ENCODE measurements at regions of chrX and their contacts with region 1.

Region 1: GRCh38 chrX:9341291-9342201 is 123.3 kb upstream of the TBL1X start:
- DNase-seq: peak; percentile 83
- H3K4me3 Mint-ChIP-seq: peak overlapping the region; percentile 76
- H3K27ac Mint-ChIP-seq: peak overlapping the region; percentile 85
- H3K4me1 Mint-ChIP-seq: peaks cover 31% of the 10 kb centered on the region
- H3K27me3 Mint-ChIP-seq: no peaks in the 10 kb centered on the region

Region 2: GRCh38 chrX:9164535-9165425 is 176.8 kb before region 1 on chrX:
- intact Hi-C with region 1: loop called (anchors 5 kb)
- DNase-seq: no peak
- H3K4me3 Mint-ChIP-seq: peak overlapping the region; percentile 11
- H3K27ac Mint-ChIP-seq: peak overlapping the region; percentile 77
- H3K4me1 Mint-ChIP-seq: peaks cover 30% of the 10 kb centered on the region
- H3K27me3 Mint-ChIP-seq: no peaks in the 10 kb centered on the region

Region 3: GRCh38 chrX:9285342-9285771 is 56.2 kb before region 1 on chrX:
- intact Hi-C with region 1: loop called (anchors 1 kb)
- DNase-seq: peak; percentile 66
- H3K4me3 Mint-ChIP-seq: peak overlapping the region; percentile 46
- H3K27ac Mint-ChIP-seq: peak overlapping the region; percentile 88
- H3K4me1 Mint-ChIP-seq: peaks cover 24% of the 10 kb centered on the region
- H3K27me3 Mint-ChIP-seq: no peaks in the 10 kb centered on the region

Region 4: DNA sequence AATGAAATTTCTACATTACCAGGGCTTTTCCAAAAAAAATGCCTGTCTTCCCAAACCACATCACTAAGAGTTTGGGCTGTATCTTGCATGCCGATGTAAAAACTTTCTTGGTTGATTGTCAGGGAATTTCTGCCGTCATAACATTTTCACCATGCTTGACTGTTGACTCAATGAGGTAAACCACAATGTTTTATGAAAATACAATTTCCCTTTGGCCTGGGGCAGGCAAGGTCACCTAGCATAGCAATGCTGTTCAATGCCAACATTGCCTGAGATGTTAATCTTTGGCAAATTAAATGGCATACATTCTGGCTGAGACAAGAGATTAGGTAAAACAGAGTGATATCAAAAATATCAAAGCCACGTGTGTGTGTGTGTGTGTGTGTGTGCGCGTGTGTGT is 13.8 kb before region 1 on chrX:
- intact Hi-C with region 1: no loop called
- DNase-seq: no peak
- H3K4me3 Mint-ChIP-seq: no peak overlapping the region
- H3K27ac Mint-ChIP-seq: no peak overlapping the region
- H3K4me1 Mint-ChIP-seq: no peaks in the 10 kb centered on the region
- H3K27me3 Mint-ChIP-seq: peaks cover 2% of the 10 kb centered on the region

Region 5: GRCh38 chrX:9352694-9353411 is 11.3 kb after region 1 on chrX:
- intact Hi-C with region 1: loop called (anchors 1 kb)
- DNase-seq: peak; percentile 85
- H3K4me3 Mint-ChIP-seq: peak overlapping the region; percentile 71
- H3K27ac Mint-ChIP-seq: peak overlapping the region; percentile 86
- H3K4me1 Mint-ChIP-seq: peaks cover 31% of the 10 kb centered on the region
- H3K27me3 Mint-ChIP-seq: no peaks in the 10 kb centered on the region

Region 6: GRCh38 chrX:9464435-9465371 is 123.2 kb after region 1 on chrX and contains the start of gene TBL1X:
- intact Hi-C with region 1: loop called (anchors 1 kb)
- DNase-seq: peak; percentile 87
- H3K4me3 Mint-ChIP-seq: peak within 1 kb of the TSS; percentile 73
- H3K27ac Mint-ChIP-seq: peak within 1 kb of the TSS; percentile 84
- H3K4me1 Mint-ChIP-seq: peaks cover 33% of the 10 kb centered on the region
- H3K27me3 Mint-ChIP-seq: peaks cover 5% of the 10 kb centered on the region
- total RNA-seq, gene TBL1X: 20.0 and 25.5 TPM in 2 replicates

Region 7: DNA sequence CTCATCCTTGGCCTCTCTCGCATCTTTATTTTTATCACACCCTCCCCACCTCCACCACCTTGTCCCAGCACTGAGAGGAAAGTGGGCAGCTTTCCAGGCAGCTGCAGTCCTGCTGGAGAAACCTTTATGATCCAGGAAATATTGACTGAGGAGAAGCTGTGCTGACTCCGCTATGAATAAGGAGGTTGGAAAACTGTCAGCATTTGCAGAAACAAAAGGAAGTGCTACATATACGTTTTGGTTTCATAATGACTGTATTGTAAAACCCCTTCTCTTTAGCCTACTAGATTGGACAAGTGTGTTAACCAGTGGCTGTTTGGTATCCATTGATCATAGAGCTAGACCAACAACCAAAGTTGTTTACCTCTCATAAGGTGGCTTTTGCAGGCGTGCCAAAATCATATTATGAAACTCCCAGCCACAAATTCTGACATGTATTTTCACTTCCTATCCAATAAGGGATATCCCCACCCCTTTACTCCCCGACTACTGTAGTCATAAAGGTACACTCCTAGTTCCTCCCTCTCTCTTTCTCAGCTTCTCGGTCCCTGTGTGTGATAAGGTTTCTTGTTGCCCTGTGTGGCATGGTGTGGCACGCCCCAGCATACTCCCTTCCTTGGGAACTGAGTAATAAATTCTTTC is 335.7 kb after region 1 on chrX:
- intact Hi-C with region 1: loop called (anchors 1 kb)
- DNase-seq: peak; percentile 82
- H3K4me3 Mint-ChIP-seq: peak overlapping the region; percentile 58
- H3K27ac Mint-ChIP-seq: peak overlapping the region; percentile 79
- H3K4me1 Mint-ChIP-seq: peaks cover 20% of the 10 kb centered on the region
- H3K27me3 Mint-ChIP-seq: no peaks in the 10 kb centered on the region

Region 8: DNA sequence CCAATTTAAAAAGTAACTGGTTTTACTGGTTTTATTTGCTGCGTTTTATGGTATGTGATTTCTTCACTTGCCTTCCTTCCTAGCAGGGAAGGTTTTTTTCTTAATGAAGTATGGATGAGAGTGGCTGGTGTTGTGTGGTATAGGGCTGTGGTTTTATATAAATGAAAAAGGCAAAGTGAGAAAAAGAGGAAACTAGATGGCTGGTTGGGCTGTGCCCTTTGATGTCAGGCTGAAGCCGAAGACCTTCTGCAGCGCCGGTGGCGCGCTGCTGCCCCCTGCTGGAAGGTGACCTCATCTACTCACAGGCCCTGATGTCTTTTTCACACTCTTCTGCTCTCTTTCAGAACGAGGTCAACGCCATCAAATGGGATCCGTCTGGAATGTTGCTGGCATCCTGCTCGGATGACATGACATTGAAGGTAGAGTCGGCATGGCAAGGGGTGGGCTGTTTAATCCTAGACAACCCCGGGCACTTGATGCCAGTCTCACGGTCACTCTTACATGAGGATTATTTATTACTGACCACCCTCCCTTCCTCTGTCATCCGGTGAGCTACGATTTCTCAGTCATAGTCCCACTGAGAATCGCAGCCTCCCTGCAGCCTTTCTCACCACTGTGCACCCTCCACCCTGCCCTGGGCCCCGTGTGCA is 367.5 kb after region 1 on chrX:
- intact Hi-C with region 1: loop called (anchors 5 kb)
- DNase-seq: peak; percentile 92
- H3K4me3 Mint-ChIP-seq: no peak overlapping the region
- H3K27ac Mint-ChIP-seq: no peak overlapping the region
- H3K4me1 Mint-ChIP-seq: peaks cover 8% of the 10 kb centered on the region
- H3K27me3 Mint-ChIP-seq: no peaks in the 10 kb centered on the region